Dendritic cell treated with granulocyte-macrophage colony-stimulating factor and Interleukin-4, amounts not matched to agents 40 ng/mL and 50 ng/mL, for 4 days (primary cell): ENCODE measurements at regions of chr22 and their contacts with region 1.

Region 1: GRCh38 chr22:44080936-44081861 is 57.1 kb downstream of the PARVB start:
- H3K4me3 Mint-ChIP-seq: no peak overlapping the region
- H3K27ac Mint-ChIP-seq: no peak overlapping the region
- H3K4me1 Mint-ChIP-seq: peaks cover 20% of the 10 kb centered on the region
- H3K27me3 Mint-ChIP-seq: no peaks in the 10 kb centered on the region

Region 2: DNA sequence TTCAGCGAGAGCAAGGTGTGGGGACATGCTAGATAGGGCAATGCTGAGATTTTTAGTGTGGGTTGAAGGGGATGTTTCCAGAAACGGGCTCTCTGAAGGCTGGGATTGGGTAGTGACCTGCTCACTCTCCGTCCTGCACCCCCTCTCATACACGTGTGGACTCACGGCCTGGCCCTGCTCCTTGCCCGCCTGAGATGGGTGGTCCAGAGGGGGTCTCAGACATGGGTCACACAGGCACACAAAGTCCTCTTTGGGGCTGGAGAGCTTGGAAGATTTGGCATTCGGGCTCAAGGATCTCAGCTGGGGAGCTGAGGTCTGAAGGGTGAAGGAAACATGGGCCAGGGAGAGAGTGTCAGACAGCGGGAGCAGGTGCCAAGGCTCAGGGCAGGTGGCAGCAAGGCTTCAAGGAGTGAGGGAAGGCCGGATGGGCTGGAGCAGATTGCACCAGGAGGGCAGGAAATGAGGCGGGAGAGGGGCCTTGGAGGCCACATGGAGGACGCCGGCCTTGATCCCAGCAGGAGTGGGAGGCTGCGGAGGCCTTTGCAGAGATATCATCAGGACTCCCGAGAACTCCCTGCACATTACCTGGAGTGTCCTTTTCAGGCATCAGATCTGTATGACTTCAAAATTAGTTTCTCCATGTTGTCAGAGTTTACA is 17.0 kb after region 1 on chr22:
- intact Hi-C with region 1: no loop called
- H3K4me3 Mint-ChIP-seq: no peak overlapping the region
- H3K27ac Mint-ChIP-seq: peak overlapping the region; percentile 14
- H3K4me1 Mint-ChIP-seq: peaks cover 11% of the 10 kb centered on the region
- H3K27me3 Mint-ChIP-seq: no peaks in the 10 kb centered on the region

Region 3: DNA sequence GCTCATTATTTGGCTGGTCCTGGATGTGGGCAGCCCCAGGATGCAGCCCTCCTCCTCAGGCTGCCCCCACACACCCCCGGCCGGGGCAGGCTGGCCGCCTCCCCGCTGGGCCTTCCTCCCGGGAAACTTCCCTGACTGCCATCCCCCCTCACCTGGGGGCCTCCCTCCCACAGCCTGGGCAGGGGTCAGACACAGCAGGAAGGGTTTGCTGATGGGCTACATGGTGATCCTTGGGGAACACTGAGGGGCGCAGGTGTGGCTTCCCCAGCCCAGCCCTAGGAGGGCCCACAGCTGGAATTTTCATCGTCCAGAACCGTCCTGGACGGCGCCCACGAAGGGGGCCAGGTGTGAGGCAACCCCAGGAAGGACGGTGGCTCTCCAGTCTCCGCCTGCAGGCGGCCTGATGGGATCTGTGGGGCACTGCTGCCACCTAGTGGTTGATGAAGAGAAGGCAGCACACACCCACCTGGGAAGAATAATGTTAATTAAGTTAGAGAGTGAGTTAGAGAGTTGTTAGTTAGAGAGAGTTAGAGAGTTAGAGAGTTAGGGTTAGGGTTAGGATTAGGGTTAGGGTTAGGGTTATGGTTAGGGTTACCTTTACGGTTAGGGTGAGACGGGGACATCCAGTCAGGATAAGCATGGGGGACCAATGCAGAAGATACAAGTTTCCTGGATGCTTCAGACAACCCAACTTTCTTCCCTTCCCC is 544.9 kb after region 1 on chr22:
- intact Hi-C with region 1: loop called (anchors 1 kb)
- H3K4me3 Mint-ChIP-seq: no peak overlapping the region
- H3K27ac Mint-ChIP-seq: no peak overlapping the region
- H3K4me1 Mint-ChIP-seq: no peaks in the 10 kb centered on the region
- H3K27me3 Mint-ChIP-seq: peaks cover 10% of the 10 kb centered on the region